Calu3 (cell line): ENCODE measurements at regions of chr5 and their contacts with region 1.

Region 1: DNA sequence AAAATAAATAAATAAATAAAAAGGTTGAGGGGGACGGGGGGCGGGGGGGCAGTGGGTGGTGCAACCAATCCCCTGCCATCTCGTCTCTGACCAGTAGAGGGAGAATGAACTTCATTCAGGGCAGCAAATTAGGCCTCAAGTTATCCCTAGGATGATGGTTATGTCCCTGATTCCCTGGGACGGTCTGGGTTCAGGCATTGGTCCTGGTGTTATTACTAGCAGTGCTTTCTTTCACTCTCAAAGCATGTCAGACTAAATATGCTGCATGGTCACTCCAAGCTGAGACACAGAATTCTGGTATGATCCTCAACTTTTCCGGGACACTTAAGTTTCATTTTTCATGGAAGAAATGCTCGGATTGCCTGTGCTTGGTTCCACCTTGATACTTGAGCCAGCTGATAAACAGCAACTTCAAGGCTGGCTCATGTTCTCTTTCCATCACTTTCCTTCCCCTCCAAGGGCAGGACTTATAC is 59.4 kb downstream of the DAP start:
- DNase-seq: peak; percentile 50
- H3K4me3 Mint-ChIP-seq: peak overlapping the region; percentile 50
- H3K27ac Mint-ChIP-seq: peak overlapping the region; percentile 79
- H3K4me1 Mint-ChIP-seq: peaks cover 63% of the 10 kb centered on the region
- H3K27me3 Mint-ChIP-seq: no peaks in the 10 kb centered on the region
- CTCF ChIP-seq: peak; percentile 83

Region 2: GRCh38 chr5:10387690-10388089 is 313.9 kb before region 1 on chr5:
- CTCF ChIA-PET with region 1: no interaction called
- intact Hi-C with region 1: no loop called
- DNase-seq: no peak
- H3K4me3 Mint-ChIP-seq: no peak overlapping the region
- H3K27ac Mint-ChIP-seq: no peak overlapping the region
- H3K4me1 Mint-ChIP-seq: no peaks in the 10 kb centered on the region
- H3K27me3 Mint-ChIP-seq: no peaks in the 10 kb centered on the region
- CTCF ChIP-seq: no peak

Region 3: DNA sequence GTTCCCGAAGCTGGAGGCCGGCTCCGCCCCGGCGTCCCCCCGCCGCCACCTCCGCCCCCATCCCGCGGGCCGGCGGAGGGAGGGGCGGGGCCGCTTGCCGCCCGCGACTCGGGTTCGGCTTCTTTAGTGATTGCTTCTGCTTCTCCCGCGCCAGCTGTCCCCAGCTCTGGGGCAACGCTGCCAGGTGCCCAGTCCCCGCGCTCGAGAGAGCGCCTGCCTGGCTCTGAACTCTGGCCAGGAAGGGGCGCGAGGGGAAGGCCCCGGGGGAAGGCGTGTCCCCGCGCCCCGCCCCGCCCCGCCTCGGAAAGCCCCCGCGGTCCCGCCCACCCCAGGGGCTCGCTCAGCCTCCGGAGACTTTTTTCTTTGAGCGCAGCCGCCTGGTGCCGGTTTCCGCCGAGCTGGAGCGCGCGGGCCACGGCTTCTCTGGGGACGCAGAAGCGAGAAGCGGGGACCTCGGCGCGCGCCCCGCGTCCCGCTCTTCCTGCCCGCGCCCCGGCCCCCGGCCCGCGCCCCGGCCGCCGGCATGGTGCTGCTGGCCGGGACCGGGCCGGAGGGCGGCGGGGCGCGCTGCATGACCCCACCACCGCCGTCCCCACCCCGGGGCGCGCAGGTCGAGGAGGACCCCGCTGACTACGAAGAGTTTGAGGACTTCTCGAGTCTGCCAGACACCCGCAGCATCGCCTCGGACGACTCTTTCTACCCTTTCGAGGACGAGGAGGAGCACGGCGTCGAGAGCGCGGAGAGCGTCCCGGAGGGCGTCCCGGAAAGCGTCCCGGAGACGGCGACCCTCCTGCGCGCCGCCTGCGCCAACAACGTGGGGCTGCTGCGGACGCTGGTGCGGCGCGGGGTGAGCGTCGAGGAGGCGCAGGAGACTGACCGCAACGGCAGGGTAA is 137.4 kb before region 1 on chr5 and contains the start of gene ANKRD33B:
- CTCF ChIA-PET with region 1: no interaction called
- intact Hi-C with region 1: no loop called
- DNase-seq: peak; percentile 70
- H3K4me3 Mint-ChIP-seq: peak within 1 kb of the TSS; percentile 79
- H3K27ac Mint-ChIP-seq: peak within 1 kb of the TSS; percentile 12
- H3K4me1 Mint-ChIP-seq: peaks cover 9% of the 10 kb centered on the region
- H3K27me3 Mint-ChIP-seq: peaks cover 7% of the 10 kb centered on the region
- CTCF ChIP-seq: no peak
- total RNA-seq, gene ANKRD33B: 2.9 and 3.6 TPM in 2 replicates

Region 4: DNA sequence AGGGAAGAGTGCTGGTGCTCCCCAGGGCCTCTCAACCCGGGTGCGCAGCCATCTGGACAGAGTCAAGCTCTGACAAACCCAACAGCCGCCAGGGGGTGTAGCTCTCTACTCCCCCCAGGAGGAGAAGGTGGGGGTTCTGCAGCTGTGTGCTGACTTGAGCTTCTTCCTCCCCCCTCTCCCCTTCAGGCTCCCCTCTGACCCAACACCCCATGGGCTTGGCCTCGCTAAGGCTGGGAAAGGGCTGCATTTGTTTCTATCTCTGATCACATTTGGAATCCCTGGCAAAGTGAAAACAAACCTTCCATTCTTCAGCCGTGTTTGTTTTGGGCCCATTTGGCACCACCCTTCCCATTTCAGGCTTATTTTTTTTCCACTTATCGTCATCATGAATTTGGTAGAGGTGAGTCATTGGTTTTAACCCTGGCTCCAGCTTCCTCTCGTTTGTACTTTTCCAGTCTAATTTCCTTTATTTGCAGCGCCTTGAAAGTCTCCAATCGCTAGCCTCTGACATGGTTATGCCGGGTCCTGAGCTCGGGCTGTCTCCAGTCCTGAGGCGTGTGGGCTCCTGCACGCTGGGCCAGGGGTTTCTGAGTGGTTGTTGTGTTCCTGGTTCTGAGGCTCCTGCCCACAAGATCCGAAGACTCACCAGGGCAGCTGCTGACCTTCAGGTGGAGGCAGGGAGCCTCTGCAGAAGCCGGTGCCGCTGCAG is 23.4 kb after region 1 on chr5:
- CTCF ChIA-PET with region 1: interaction called, 9 read pairs
- intact Hi-C with region 1: loop called (anchors 2 kb)
- DNase-seq: peak; percentile 82
- H3K4me3 Mint-ChIP-seq: peak overlapping the region; percentile 65
- H3K27ac Mint-ChIP-seq: peak overlapping the region; percentile 97
- H3K4me1 Mint-ChIP-seq: peaks cover 64% of the 10 kb centered on the region
- H3K27me3 Mint-ChIP-seq: no peaks in the 10 kb centered on the region
- CTCF ChIP-seq: peak; percentile 77

Region 5: DNA sequence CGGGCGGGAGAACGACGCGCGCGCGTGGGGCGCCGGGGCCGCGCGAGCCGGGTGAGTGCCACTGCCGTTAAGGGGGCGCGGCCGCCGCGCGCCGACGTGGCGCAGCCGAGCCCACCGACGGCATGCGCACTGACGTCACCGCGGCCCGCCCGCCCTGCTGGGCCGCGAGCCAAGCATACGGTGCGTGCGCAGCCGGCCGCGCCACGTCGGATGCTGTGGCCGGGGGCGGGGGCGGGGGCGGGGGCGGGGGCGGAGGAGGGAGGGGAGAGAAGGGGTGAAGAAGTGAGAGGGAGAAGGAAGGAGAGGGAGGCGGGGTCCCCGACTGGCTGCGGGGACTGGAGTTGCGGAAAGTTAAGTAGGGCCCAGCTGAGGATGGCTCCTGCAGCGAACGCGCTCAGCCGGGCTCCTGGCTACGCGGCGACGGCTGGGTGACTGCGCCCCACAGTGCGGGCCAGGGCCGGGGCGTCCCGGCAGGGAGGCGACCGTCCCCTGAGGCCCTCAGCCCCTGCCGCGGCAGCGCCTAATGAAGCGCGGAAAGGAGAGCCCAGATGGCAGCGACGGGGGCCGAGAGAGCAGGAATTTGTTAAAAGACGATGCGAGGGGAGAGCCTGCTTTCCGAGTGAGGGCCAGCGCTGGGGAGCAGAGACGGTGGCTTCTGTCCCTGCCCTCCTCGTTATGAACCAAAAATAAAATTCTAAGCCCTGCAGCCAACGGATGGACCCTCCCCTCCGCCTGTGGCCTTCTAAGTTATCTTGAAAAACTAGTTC is 59.7 kb after region 1 on chr5 and contains the start of gene DAP:
- CTCF ChIA-PET with region 1: no interaction called
- intact Hi-C with region 1: loop called (anchors 5 kb)
- DNase-seq: peak; percentile 89
- H3K4me3 Mint-ChIP-seq: peak within 1 kb of the TSS; percentile 97
- H3K27ac Mint-ChIP-seq: peak within 1 kb of the TSS; percentile 99
- H3K4me1 Mint-ChIP-seq: peaks cover 21% of the 10 kb centered on the region
- H3K27me3 Mint-ChIP-seq: peaks cover 13% of the 10 kb centered on the region
- CTCF ChIP-seq: no peak
- total RNA-seq, gene DAP: 138 and 141 TPM in 2 replicates

Region 6: GRCh38 chr5:10856683-10857337 is 155.2 kb after region 1 on chr5:
- CTCF ChIA-PET with region 1: no interaction called
- intact Hi-C with region 1: loop called (anchors 5 kb)
- DNase-seq: peak; percentile 70
- H3K4me3 Mint-ChIP-seq: no peak overlapping the region
- H3K27ac Mint-ChIP-seq: no peak overlapping the region
- H3K4me1 Mint-ChIP-seq: no peaks in the 10 kb centered on the region
- H3K27me3 Mint-ChIP-seq: peaks cover 100% of the 10 kb centered on the region
- CTCF ChIP-seq: peak; percentile 86